Breast epithelium (tissue), 4 donors: ENCODE measurements at regions of chrX and their contacts with region 1.

Region 1: GRCh38 chrX:110044346-110045249 is 41.7 kb downstream of the TMEM164 start:
- DNase-seq: no peak
- H3K4me3 ChIP-seq: no peak overlapping the region
- H3K27ac ChIP-seq: no peak overlapping the region
- H3K4me1 ChIP-seq: no peaks in the 10 kb centered on the region
- H3K27me3 ChIP-seq: peaks cover 0 to 41% of the 10 kb centered on the region in 2 donors
- CTCF ChIP-seq: no peak
- POLR2A ChIP-seq: no peak

Region 2: GRCh38 chrX:110059410-110059809 is 14.8 kb after region 1 on chrX:
- intact Hi-C with region 1: no loop called
- DNase-seq: no peak
- H3K4me3 ChIP-seq: no peak overlapping the region
- H3K27ac ChIP-seq: no peak overlapping the region
- H3K4me1 ChIP-seq: no peaks in the 10 kb centered on the region
- H3K27me3 ChIP-seq: peaks cover 0 to 33% of the 10 kb centered on the region in 2 donors
- CTCF ChIP-seq: no peak
- POLR2A ChIP-seq: no peak

Region 3: DNA sequence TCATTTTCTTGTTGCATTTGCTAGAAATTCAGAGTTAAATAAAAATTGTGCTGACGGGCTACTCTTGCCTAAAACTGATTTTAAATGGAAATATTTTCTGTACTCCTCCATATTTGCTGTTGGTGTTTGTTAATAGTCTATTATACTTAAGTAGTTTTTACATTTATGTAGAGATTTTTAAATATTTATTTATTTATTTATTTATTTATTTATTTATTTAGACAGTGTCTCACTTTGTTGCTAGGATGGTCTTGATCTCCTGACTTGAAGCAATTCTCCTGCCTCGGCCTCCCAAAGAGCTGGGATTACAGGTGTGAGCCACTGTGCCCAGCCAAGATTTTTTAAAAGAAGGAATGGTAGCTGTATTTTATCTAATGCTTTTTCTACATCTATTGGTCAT is 26.4 kb after region 1 on chrX:
- intact Hi-C with region 1: loop called (anchors 2 kb)
- DNase-seq: no peak
- H3K4me3 ChIP-seq: no peak overlapping the region
- H3K27ac ChIP-seq: no peak overlapping the region
- H3K4me1 ChIP-seq: no peaks in the 10 kb centered on the region
- H3K27me3 ChIP-seq: peaks cover 0 to 9% of the 10 kb centered on the region in 2 donors
- CTCF ChIP-seq: no peak
- POLR2A ChIP-seq: no peak